HEK293T (cell line): ENCODE measurements at regions of chr9 and their contacts with region 1.

Region 1: GRCh38 chr9:128098297-128099230 is 29.0 kb downstream of the PTGES2 start:
- DNase-seq: peak; percentile 88

Region 2: DNA sequence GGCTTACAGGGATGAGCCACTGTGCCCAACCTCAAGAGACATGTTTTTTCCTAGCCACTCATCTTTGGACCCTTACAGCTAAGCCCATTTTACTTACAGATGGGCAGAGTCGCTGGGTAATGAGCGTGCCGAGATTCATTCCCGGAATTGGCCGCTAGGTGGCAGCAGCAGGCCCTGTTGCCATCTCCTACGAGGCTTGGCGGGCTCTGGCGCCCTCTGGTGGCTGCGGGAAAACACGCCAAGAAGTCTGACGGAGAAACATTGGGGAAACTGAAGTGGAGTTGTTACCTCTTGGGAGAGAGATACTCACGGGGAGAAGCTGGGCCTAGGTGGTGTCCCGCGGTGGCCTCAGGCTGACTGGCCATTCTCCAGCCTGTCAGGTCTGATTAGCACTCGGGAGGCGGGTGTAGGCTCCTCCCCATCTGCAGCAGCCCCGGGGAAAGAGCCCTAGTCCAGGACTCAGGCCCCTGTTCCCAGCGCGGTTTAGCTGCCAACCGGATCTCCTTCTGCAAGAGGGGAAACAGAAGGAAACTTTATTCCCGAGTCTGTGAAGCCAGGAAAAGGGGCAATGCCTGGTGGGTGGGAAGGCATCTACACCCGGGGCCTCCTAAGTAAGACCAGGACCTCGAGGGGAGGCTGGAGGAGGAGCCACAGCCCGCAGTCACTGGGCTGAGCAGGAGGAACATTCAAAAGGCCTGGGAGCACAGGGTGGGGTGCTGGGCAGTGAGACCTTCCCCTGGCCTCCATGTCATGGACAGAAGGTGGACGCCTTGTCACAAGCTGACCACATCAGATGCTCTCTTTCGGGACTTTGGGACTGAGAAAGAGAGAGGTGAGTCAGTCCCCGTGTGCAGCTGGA is 19.3 kb after region 1 on chr9:
- CTCF ChIA-PET with region 1: interaction called, 12 read pairs
- POLR2A ChIA-PET with region 1: interaction called, 3 read pairs
- DNase-seq: peak; percentile 89